Activated CD4-positive, alpha-beta T cell treated with anti-CD3 and anti-CD28 coated beads for 36 hours (primary cell): ENCODE measurements at regions of chr11 and their contacts with region 1.

Region 1: GRCh38 chr11:82867495-82868082 is 32.6 kb downstream of the PRCP start:
- DNase-seq: peak; percentile 87
- ATAC-seq: peak; percentile 63
- H3K4me3 Mint-ChIP-seq: no peak overlapping the region
- H3K27ac Mint-ChIP-seq: no peak overlapping the region
- H3K4me1 Mint-ChIP-seq: peaks cover 14% of the 10 kb centered on the region
- H3K27me3 Mint-ChIP-seq: no peaks in the 10 kb centered on the region

Region 2: GRCh38 chr11:82883853-82884252 is 16.3 kb after region 1 on chr11:
- CTCF ChIA-PET with region 1: interaction called, 13 read pairs
- POLR2A ChIA-PET with region 1: no interaction called
- intact Hi-C with region 1: no loop called
- DNase-seq: no peak
- ATAC-seq: no peak
- H3K4me3 Mint-ChIP-seq: no peak overlapping the region
- H3K27ac Mint-ChIP-seq: no peak overlapping the region
- H3K4me1 Mint-ChIP-seq: no peaks in the 10 kb centered on the region
- H3K27me3 Mint-ChIP-seq: no peaks in the 10 kb centered on the region

Region 3: GRCh38 chr11:82900277-82901164 is 32.9 kb after region 1 on chr11 and contains the start of gene PRCP:
- CTCF ChIA-PET with region 1: interaction called, 17 read pairs
- POLR2A ChIA-PET with region 1: no interaction called
- intact Hi-C with region 1: loop called (anchors 1 to 2 kb)
- DNase-seq: peak; percentile 97
- ATAC-seq: peak; percentile 85
- H3K4me3 Mint-ChIP-seq: peak within 1 kb of the TSS; percentile 91
- H3K27ac Mint-ChIP-seq: peak within 1 kb of the TSS; percentile 100
- H3K4me1 Mint-ChIP-seq: peaks cover 44% of the 10 kb centered on the region
- H3K27me3 Mint-ChIP-seq: no peaks in the 10 kb centered on the region
- total RNA-seq, gene PRCP: 18.2 to 23.4 TPM

Region 4: DNA sequence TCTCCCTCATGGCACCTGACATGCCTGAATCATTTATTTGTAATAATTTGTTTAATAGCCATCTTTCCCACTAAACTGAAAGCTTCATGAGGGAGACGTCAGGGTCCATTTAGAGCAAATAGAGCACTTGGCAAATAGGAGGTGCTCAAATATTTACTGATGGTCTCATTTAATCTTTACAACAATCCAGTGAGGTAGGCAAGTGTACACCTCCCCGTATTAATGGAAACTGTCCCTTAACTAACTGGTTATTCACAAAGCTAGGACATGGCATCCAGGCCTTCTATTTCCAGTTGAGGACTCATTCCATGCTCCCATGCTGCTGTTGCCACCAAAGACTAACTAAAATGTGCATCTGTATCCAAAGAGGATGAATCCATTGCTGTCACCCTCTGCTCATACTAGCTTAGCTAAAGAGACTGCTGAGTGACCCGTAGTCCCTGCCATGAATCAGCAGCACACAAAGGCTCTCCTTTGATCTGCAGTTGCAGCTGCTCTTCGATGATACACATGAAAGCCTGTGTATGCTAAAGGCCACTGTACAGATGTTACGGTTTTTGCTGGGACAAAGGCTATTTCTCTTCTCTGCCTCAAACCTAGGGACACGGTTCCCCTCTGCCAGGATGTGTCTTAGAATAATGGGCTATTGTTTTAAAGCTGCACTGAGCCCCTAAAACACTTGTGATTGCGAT is 121.5 kb after region 1 on chr11:
- CTCF ChIA-PET with region 1: interaction called, 11 read pairs
- POLR2A ChIA-PET with region 1: no interaction called
- intact Hi-C with region 1: no loop called
- DNase-seq: no peak
- ATAC-seq: no peak
- H3K4me3 Mint-ChIP-seq: no peak overlapping the region
- H3K27ac Mint-ChIP-seq: no peak overlapping the region
- H3K4me1 Mint-ChIP-seq: peaks cover 15% of the 10 kb centered on the region
- H3K27me3 Mint-ChIP-seq: no peaks in the 10 kb centered on the region

Region 5: GRCh38 chr11:83724008-83724461 is 856.4 kb after region 1 on chr11:
- CTCF ChIA-PET with region 1: no interaction called
- POLR2A ChIA-PET with region 1: no interaction called
- intact Hi-C with region 1: loop called in 1 of 2 experiments (anchors 10 kb)
- DNase-seq: peak; percentile 33
- ATAC-seq: peak; percentile 60
- H3K4me3 Mint-ChIP-seq: no peak overlapping the region
- H3K27ac Mint-ChIP-seq: no peak overlapping the region
- H3K4me1 Mint-ChIP-seq: peaks cover 4% of the 10 kb centered on the region
- H3K27me3 Mint-ChIP-seq: peaks cover 12% of the 10 kb centered on the region